Astrocyte of the spinal cord (primary cell): ENCODE measurements at regions of chr15 and their contacts with region 1.

Region 1: DNA sequence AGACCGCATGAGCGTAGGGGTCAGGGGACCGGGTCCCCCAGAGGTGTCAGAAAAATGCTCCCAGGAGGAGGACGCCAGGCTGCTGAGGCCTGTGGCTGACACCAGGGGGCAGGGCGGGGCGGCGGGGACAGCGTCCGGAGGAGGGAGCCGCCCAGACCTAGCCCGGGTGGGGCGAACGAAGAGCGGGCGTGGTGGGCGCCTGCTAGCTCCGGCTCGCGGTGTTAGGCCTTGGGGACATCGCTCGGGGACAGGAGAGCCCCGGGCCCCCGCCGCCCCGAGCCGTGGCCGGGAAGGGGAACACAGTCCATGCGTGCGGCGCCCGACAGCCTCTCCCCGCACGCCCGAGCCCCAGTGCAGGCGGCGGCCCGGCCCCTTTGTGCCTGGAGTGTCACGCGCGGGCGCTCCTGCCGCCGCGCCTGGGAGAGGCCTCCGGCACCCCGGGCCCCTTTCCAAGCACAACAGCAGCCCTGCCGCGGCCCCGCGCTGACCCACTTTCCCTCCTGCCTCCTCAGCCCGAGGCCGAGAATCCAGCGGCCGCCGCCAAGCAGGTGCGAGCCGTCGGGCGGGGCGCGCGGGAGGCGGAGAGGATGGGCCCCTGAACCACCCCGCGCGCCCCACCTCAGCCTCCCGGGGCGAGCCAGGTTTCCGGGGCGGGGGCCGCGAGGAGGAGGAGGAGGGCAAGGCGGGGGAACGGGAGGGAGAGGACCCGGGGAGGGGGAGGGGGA is 111.0 kb upstream of the KLF13 start:
- DNase-seq: peak; percentile 49
- H3K4me3 ChIP-seq: peak overlapping the region; percentile 36
- CTCF ChIP-seq: peak; percentile 82

Region 2: GRCh38 chr15:31489801-31490646 is 274.4 kb after region 1 on chr15:
- in situ Hi-C with region 1: loop called (anchors 10 kb)
- DNase-seq: peak; percentile 49
- H3K4me3 ChIP-seq: no peak overlapping the region
- CTCF ChIP-seq: peak; percentile 91